T-cell (primary cell): ENCODE measurements at regions of chr9 and their contacts with region 1.

Region 1: GRCh38 chr9:113401027-113401792 is at the start of gene ALAD:
- DNase-seq: peak; percentile 97 to 100 (median 99)
- ATAC-seq: peak; percentile 98 to 100 (median 99)
- H3K4me3 ChIP-seq: peak within 1 kb of the TSS; percentile 89 to 96
- H3K4me3 Mint-ChIP-seq: peak within 1 kb of the TSS; percentile 90 to 92 (median 91)
- H3K27ac ChIP-seq: peak within 1 kb of the TSS; percentile 28
- H3K27ac Mint-ChIP-seq: peak within 1 kb of the TSS; percentile 66 to 87
- H3K4me1 ChIP-seq: peaks cover 7 to 25% of the 10 kb centered on the region in 2 experiments
- H3K4me1 Mint-ChIP-seq: peaks cover 23 to 36% (median 35%) of the 10 kb centered on the region in 3 donors
- H3K27me3 ChIP-seq: no peaks in the 10 kb centered on the region
- H3K27me3 Mint-ChIP-seq: no peaks in the 10 kb centered on the region
- total RNA-seq, gene ALAD: 23.4 to 40.8 (median 35.2) TPM

Region 2: GRCh38 chr9:113095561-113095960 is 305.6 kb before region 1 on chr9:
- CTCF ChIA-PET with region 1: no interaction called
- POLR2A ChIA-PET with region 1: no interaction called
- DNase-seq: no peak
- ATAC-seq: no peak
- H3K4me3 ChIP-seq: no peak overlapping the region
- H3K4me3 Mint-ChIP-seq: no peak overlapping the region
- H3K27ac ChIP-seq: no peak overlapping the region
- H3K27ac Mint-ChIP-seq: no peak overlapping the region
- H3K4me1 ChIP-seq: no peaks in the 10 kb centered on the region
- H3K4me1 Mint-ChIP-seq: no peaks in the 10 kb centered on the region
- H3K27me3 ChIP-seq: peaks cover 5 to 12% of the 10 kb centered on the region in 2 experiments
- H3K27me3 Mint-ChIP-seq: peaks cover 48 to 84% of the 10 kb centered on the region in 2 donors

Region 3: GRCh38 chr9:113361304-113362018 is 39.7 kb before region 1 on chr9:
- CTCF ChIA-PET with region 1: no interaction called
- POLR2A ChIA-PET with region 1: no interaction called
- DNase-seq: no peak
- ATAC-seq: no peak
- H3K4me3 ChIP-seq: no peak overlapping the region
- H3K4me3 Mint-ChIP-seq: no peak overlapping the region
- H3K27ac ChIP-seq: no peak overlapping the region
- H3K27ac Mint-ChIP-seq: no peak overlapping the region
- H3K4me1 ChIP-seq: no peaks in the 10 kb centered on the region
- H3K4me1 Mint-ChIP-seq: no peaks in the 10 kb centered on the region
- H3K27me3 ChIP-seq: no peaks in the 10 kb centered on the region
- H3K27me3 Mint-ChIP-seq: no peaks in the 10 kb centered on the region

Region 4: DNA sequence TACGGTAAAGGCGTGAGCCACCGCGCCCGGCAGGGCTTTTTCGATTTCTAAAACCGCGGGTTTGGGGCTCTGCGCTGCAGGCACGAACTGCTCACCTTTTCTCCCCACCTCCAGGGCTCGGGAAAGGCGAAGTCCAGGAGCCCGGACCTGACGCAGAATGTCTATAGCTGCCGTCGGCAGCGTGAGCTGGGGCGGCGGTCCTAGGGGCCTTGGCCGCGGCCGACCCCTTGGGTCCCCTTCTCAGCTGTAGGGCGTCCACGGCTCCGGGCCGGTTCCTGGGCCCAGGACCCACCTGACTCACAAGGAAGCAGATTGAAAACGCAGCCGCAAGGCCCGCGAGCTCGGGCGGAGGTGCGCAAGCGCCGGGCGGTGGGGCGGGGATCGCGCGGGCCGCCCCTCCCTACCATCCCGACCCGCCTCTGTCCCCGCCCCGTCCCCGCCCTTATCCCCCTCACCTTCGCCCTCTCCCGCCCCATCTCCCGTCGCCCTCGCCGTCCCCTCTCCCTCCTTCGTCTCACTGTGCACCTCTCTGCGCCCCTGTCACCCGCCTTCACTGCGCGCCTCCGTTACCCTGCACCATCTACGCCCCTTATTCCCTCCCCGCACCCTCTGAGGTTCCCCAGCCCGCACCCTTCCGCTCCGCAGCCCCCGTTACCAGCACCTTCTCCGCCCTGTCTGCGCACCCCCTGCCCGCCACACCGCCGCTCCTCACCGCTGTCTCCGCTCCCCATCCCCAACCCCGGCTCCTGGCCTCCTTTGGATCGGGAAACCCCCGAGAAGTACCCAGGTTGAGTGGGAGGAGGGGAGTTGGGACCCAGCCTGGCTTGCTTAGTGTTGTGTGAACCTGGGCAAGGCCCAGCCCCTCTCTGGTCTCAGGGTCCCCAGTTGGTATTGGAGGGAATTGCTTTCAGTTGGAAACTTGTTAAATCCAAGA is 24.3 kb before region 1 on chr9 and contains the start of gene HDHD3:
- CTCF ChIA-PET with region 1: interaction called, 6 to 13 read pairs
- POLR2A ChIA-PET with region 1: interaction called in 1 of 2 experiments, 5 read pairs
- DNase-seq: peak; percentile 23 to 89 (median 71)
- ATAC-seq: peak; percentile 90 to 94 (median 92)
- H3K4me3 ChIP-seq: peak within 1 kb of the TSS; percentile 95 to 97
- H3K4me3 Mint-ChIP-seq: peak within 1 kb of the TSS; percentile 81 to 84 (median 83)
- H3K27ac ChIP-seq: peak within 1 kb of the TSS; percentile 75
- H3K27ac Mint-ChIP-seq: peak within 1 kb of the TSS; percentile 81 to 88
- H3K4me1 ChIP-seq: peaks cover 0 to 22% of the 10 kb centered on the region in 2 experiments
- H3K4me1 Mint-ChIP-seq: peaks cover 13 to 17% (median 16%) of the 10 kb centered on the region in 3 donors
- H3K27me3 ChIP-seq: no peaks in the 10 kb centered on the region
- H3K27me3 Mint-ChIP-seq: peaks cover 0 to 7% of the 10 kb centered on the region in 2 donors
- total RNA-seq, gene HDHD3: 15.2 to 34.6 (median 17.4) TPM

Region 5: GRCh38 chr9:113508111-113508749 is 107.0 kb after region 1 on chr9:
- CTCF ChIA-PET with region 1: no interaction called
- POLR2A ChIA-PET with region 1: no interaction called
- DNase-seq: no peak
- ATAC-seq: no peak
- H3K4me3 ChIP-seq: no peak overlapping the region
- H3K4me3 Mint-ChIP-seq: no peak overlapping the region
- H3K27ac ChIP-seq: no peak overlapping the region
- H3K27ac Mint-ChIP-seq: no peak overlapping the region
- H3K4me1 ChIP-seq: peaks cover 15 to 32% of the 10 kb centered on the region in 2 experiments
- H3K4me1 Mint-ChIP-seq: peaks cover 29 to 45% (median 34%) of the 10 kb centered on the region in 3 donors
- H3K27me3 ChIP-seq: no peaks in the 10 kb centered on the region
- H3K27me3 Mint-ChIP-seq: no peaks in the 10 kb centered on the region

Region 6: GRCh38 chr9:113652355-113653152 is 251.3 kb after region 1 on chr9:
- CTCF ChIA-PET with region 1: interaction called, 8 to 12 read pairs
- POLR2A ChIA-PET with region 1: no interaction called
- DNase-seq: no peak
- ATAC-seq: no peak
- H3K4me3 ChIP-seq: no peak overlapping the region
- H3K4me3 Mint-ChIP-seq: no peak overlapping the region
- H3K27ac ChIP-seq: no peak overlapping the region
- H3K27ac Mint-ChIP-seq: no peak overlapping the region
- H3K4me1 ChIP-seq: peaks cover 0 to 4% of the 10 kb centered on the region in 2 experiments
- H3K4me1 Mint-ChIP-seq: peaks cover 0 to 3% (median 0%) of the 10 kb centered on the region in 3 donors
- H3K27me3 ChIP-seq: peaks cover 0 to 8% of the 10 kb centered on the region in 2 experiments
- H3K27me3 Mint-ChIP-seq: no peaks in the 10 kb centered on the region

Region 7: DNA sequence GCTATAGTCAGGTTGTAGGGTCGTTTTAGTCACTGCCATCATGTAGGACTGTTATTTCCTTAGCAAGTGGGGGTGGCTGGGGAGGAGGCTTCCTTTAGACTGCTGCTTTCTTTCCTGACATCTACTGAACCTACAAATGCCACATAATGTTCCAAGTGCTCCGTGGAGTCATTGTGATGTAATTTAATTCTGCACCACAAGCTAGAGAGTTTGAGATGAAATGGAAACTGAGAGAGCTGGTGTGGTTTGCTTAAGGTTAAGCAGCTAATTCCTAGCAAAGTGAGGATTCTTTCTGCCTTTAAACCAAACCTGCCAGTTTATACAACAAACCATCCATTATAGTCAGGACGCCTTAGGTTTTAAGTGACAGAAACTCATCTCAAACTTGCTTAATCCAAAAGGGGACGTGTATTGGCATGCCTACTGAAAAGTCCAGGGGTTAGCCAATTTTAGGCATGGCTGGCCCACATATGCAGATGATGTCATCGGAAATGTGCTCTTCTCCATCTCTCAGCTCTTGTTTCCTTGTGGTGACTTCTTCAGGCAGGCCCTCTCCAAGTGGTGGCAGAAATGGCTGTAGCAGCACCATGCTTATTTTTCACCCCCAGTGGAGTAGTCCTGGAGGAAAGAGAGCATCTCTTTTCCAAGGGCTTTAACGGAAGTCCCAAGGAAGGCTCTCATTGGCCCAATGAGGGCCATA is 505.4 kb after region 1 on chr9:
- CTCF ChIA-PET with region 1: no interaction called
- POLR2A ChIA-PET with region 1: no interaction called
- DNase-seq: no peak
- ATAC-seq: no peak
- H3K4me3 ChIP-seq: no peak overlapping the region
- H3K4me3 Mint-ChIP-seq: no peak overlapping the region
- H3K27ac ChIP-seq: no peak overlapping the region
- H3K27ac Mint-ChIP-seq: no peak overlapping the region
- H3K4me1 ChIP-seq: no peaks in the 10 kb centered on the region
- H3K4me1 Mint-ChIP-seq: no peaks in the 10 kb centered on the region
- H3K27me3 ChIP-seq: no peaks in the 10 kb centered on the region
- H3K27me3 Mint-ChIP-seq: peaks cover 3 to 10% of the 10 kb centered on the region in 2 donors

Region 8: GRCh38 chr9:114968671-114969070 is 1567.5 kb after region 1 on chr9:
- CTCF ChIA-PET with region 1: interaction called in 1 of 2 experiments, 26 read pairs
- POLR2A ChIA-PET with region 1: no interaction called
- DNase-seq: peak in 1 of 35 experiments; percentile 34
- ATAC-seq: peak in 3 of 4 experiments; percentile 23 to 67 (median 30)
- H3K4me3 ChIP-seq: no peak overlapping the region
- H3K4me3 Mint-ChIP-seq: peak overlapping the region in 1 of 3 donors; percentile 2
- H3K27ac ChIP-seq: no peak overlapping the region
- H3K27ac Mint-ChIP-seq: no peak overlapping the region
- H3K4me1 ChIP-seq: peaks cover 3 to 6% of the 10 kb centered on the region in 2 experiments
- H3K4me1 Mint-ChIP-seq: peaks cover 18 to 25% (median 24%) of the 10 kb centered on the region in 3 donors
- H3K27me3 ChIP-seq: no peaks in the 10 kb centered on the region
- H3K27me3 Mint-ChIP-seq: peaks cover 0 to 3% of the 10 kb centered on the region in 2 donors